H1 (cell line): ENCODE measurements at regions of chr19 and their contacts with region 1.

Region 1: GRCh38 chr19:9189538-9189937 is 10.8 kb downstream of the OR7D2 start:
- DNase-seq: peak in 1 of 2 experiments; percentile 0
- H3K4me3 ChIP-seq: no peak overlapping the region; a peak in 1 of 8 replicates
- H3K27ac ChIP-seq: no peak overlapping the region
- H3K4me1 ChIP-seq: no peaks in the 10 kb centered on the region
- H3K27me3 ChIP-seq: no peaks in the 10 kb centered on the region
- CTCF ChIP-seq: no peak
- EP300 ChIP-seq: no peak
- POLR2A ChIP-seq: no peak
- RAD21 ChIP-seq: no peak

Region 2: DNA sequence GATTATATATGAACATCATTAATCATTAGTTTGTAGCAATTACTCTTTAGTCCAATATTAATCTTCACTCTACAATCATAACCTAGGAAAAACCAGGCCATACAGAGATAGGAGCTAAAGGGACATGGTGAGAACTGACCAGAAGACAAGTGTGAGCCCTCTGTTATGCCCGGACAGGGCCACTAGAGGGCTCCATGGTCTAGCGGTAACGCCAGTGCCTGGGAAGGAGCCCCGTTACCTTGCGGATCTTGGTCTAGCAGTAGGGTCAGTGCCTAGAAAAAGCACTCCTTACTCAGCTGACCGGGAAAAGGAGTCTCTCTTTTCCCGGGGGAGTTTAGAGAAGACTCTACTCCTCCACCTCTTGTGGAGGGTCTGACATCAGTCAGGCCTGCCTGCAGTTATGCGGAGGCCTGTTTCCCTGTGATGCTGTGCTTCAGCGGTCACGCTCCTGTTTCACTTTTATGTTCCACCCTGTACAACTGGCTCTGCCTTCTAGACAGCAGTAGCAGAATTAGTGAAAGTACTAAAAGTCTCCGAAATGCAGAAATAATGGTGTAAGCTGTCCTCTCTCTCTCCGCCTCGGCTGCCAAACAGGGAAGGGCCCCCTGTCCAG is 16.1 kb after region 1 on chr19:
- CTCF ChIA-PET with region 1: interaction called, 11 read pairs
- POLR2A ChIA-PET with region 1: no interaction called
- DNase-seq: peak; percentile 34 to 74
- H3K4me3 ChIP-seq: no peak overlapping the region
- H3K27ac ChIP-seq: no peak overlapping the region
- H3K4me1 ChIP-seq: no peaks in the 10 kb centered on the region
- H3K27me3 ChIP-seq: no peaks in the 10 kb centered on the region
- CTCF ChIP-seq: peak; percentile 72 to 83 (median 73)
- EP300 ChIP-seq: no peak
- POLR2A ChIP-seq: no peak
- RAD21 ChIP-seq: peak; percentile 83 to 85